GM10248 (cell line): ENCODE measurements at regions of chr9 and their contacts with region 1.

Region 1: DNA sequence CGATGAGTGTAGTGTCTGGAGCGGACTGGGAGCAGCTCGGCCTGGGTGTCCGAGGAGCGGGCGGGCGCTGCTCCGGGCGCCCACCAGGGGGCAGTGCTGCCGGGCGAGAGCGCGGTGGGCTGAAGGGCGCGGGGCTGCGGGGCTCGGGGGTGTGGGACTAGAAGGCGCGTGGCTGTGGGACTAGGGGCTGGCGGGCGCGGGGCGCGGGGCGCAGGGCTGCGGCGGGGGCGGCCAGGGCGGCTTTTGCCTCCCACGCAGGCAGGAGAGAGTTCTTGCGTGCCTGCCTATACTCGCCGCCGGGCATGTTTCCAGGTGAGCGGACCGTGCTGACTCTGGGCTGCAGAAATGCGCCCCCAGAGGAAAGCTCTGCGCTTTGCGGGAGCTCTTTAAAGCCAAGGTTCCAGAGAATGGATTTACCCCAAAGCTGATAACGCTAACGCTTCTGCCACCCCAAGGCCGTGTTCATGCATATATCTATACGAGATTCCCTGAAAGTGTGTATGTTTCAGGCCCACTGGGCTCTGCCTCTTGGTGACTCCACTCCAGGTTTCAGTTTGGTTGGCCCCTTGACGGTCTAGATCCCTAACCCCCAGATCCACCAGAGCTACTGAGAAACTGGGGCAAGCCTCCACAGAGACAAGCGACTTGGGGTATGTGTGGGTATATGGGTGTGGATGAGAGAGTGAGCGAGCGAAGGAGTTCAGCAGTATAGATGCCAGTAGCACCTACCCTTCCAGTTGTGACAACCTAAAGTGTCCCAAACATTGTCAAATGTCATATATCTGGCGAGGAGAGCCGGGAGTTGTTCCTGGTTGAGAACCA is 56.2 kb downstream of the ACER2 start:
- DNase-seq: peak; percentile 91
- CTCF ChIP-seq: peak; percentile 81

Region 2: DNA sequence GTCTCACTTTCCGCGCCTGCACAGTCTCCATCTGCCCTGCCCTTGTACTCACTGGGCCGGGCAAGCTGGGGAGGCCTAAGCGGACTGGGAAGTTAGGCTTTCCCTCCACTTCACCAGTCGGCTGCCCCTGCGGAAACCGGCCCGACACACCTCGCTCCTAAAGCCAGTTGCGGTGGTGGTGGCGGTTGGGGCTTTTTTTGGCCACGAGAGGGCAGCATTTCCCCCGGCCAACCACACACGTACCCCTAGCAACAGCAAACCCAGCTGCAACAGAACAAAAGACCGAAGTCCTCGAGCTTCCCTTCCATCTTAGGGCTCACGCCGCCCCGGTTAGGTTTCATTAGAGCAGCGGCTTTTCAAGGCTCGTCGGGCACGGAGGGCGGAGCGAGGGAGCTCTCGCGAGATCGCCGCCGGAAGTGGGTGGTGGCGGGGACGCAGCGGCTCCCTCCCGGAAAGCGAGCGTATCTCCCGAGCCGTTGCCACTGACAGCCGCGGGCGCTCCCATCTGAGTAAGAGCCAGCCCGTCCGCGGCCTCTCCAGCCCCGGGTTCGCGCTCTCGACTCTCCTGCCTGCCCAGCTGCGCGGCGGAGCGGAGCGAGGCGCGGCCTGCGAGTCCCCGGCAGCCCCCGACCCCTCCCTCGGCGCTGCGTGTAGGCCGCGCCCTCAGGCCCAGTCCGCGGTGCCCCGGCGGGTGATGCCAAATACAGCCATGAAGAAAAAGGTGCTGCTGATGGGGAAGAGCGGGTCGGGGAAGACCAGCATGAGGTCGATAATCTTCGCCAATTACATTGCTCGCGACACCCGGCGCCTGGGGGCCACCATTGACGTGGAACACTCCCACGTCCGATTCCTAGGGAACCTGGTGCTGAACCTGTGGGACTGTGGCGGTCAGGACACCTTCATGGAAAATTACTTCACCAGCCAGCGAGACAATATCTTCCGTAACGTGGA is 415.7 kb before region 1 on chr9 and contains the start of gene RRAGA:
- CTCF ChIA-PET with region 1: interaction called, 22 read pairs
- POLR2A ChIA-PET with region 1: no interaction called
- DNase-seq: peak; percentile 96
- CTCF ChIP-seq: peak; percentile 76

Region 3: DNA sequence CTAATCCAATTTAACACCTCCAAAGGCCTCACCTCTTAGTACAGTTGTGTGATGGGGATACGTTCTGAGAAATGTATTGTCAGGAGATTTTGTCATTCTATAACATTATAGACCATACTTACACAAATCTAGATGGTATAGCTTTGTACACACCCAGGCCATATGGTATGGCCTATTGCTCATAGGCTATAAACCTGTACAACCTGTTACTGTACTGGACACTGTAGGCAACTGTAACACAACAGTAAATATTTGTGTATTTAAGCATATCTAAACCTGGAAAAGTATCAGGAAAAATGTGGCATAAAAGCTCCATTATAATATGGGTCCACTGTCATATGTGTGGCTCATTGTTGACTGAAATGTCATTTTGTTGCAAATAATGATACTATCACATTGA is 44.1 kb before region 1 on chr9:
- CTCF ChIA-PET with region 1: interaction called, 13 read pairs
- POLR2A ChIA-PET with region 1: no interaction called
- DNase-seq: no peak
- CTCF ChIP-seq: no peak

Region 4: DNA sequence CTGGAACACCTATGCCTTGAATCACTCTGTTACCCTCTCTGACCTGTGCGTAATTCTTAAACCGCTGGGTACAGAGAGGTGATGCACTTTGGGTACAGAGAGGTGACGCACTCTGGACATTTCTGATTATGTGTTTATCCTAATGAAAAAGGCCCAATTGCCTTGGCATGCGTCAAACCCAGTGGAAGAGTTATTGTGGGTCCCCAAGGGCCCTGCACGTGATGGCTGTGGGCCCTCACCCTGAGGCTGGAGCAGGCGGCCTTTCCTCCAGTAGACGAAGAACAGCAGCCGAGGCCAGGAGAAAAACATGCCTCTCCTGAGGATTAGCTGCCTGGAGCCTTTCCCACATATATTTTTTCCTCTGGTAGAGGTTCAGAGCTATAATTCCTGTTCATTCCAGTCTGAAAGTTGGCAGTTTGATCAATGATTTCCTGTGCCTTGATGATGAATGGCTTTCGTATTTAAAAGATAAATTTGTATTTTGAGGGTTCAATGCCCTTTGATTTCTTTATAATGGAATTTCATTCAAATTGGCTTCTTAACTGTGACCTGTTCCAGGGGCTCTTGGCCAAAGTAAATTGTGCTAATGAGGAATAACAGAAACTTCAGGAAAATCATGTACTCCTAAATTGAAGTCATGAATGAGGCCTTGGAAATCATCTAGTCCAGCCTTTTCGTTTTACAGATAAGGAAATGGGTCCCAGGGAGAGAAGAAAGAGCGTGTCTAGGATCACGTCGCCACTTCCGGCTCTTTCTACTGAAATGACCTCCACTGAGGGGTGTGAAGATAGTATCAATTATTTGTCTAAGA is 33.4 kb before region 1 on chr9:
- CTCF ChIA-PET with region 1: interaction called, 45 read pairs
- POLR2A ChIA-PET with region 1: no interaction called
- DNase-seq: no peak
- CTCF ChIP-seq: no peak

Region 5: DNA sequence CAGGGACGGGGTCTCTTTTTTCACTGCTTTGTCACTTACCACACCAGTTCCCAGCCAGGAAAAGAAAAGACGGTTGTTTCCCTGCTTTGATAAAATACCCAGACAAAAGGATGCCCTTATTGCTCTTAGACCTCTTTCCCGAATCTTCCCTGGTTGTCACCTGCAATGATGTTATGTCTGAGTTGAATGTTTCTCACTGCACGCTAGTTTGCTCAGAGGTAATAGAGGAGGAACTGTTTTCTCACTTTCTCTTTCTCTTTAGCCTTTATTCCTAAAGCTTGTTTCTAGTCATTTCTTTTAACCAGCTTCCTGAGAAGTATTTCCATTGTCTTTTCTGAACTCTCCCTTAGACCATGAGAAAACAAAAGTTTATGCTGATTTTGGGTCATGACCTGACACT is 23.2 kb before region 1 on chr9:
- CTCF ChIA-PET with region 1: interaction called, 45 read pairs
- POLR2A ChIA-PET with region 1: no interaction called
- DNase-seq: peak; percentile 65
- CTCF ChIP-seq: no peak

Region 6: GRCh38 chr9:19481971-19482404 is 17.0 kb after region 1 on chr9:
- CTCF ChIA-PET with region 1: interaction called, 50 read pairs
- POLR2A ChIA-PET with region 1: no interaction called
- DNase-seq: no peak
- CTCF ChIP-seq: no peak

Region 7: GRCh38 chr9:19488721-19489120 is 23.7 kb after region 1 on chr9:
- CTCF ChIA-PET with region 1: interaction called, 50 read pairs
- POLR2A ChIA-PET with region 1: no interaction called
- DNase-seq: no peak
- CTCF ChIP-seq: no peak

Region 8: DNA sequence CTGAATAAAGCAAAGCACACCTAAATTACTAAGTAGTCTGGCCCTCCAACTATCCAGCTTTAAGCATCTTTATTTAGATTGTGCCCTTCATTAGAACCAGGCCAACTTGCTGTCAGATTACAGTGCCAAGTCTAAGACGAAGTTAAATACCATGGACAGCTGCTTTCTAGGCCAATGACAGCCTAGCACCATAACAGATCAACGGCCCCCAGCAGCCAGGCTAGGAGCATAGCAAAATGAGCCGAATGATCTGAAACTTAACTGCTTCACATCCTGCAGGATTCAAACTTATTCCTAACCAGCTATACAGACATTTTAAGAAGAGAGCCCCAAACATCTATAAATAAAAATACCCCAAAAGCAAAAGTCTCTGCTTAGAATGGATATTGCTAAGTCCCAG is 317.0 kb after region 1 on chr9:
- CTCF ChIA-PET with region 1: no interaction called
- POLR2A ChIA-PET with region 1: no interaction called
- DNase-seq: no peak
- CTCF ChIP-seq: no peak